Activated CD8-positive, alpha-beta T cell treated with anti-CD3 and anti-CD28 coated beads, Interleukin-2, amount 10 ng/mL, durations not matched to agents 7 days and 5 days (primary cell): ENCODE measurements at regions of chr6 and their contacts with region 1.

Region 1: GRCh38 chr6:71349395-71349794 is 60.8 kb downstream of the OGFRL1 start:
- DNase-seq: no peak
- ATAC-seq: no peak
- H3K4me3 Mint-ChIP-seq: no peak overlapping the region
- H3K27ac Mint-ChIP-seq: no peak overlapping the region
- H3K4me1 Mint-ChIP-seq: no peaks in the 10 kb centered on the region
- H3K27me3 Mint-ChIP-seq: peaks cover 15% of the 10 kb centered on the region

Region 2: GRCh38 chr6:71190809-71191208 is 158.6 kb before region 1 on chr6:
- CTCF ChIA-PET with region 1: interaction called, 20 read pairs
- POLR2A ChIA-PET with region 1: no interaction called
- DNase-seq: no peak
- ATAC-seq: no peak
- H3K4me3 Mint-ChIP-seq: no peak overlapping the region
- H3K27ac Mint-ChIP-seq: no peak overlapping the region
- H3K4me1 Mint-ChIP-seq: no peaks in the 10 kb centered on the region
- H3K27me3 Mint-ChIP-seq: peaks cover 10% of the 10 kb centered on the region